ENCODE measurements at regions of chr7 and their contacts with region 1.

Region 1: GRCh38 chr7:7566651-7567611 is at the start of gene MIOS:
- H3K4me3 Mint-ChIP-seq: peak within 1 kb of the TSS; percentile 70
- H3K27ac Mint-ChIP-seq: no peak within 1 kb of the TSS
- H3K4me1 Mint-ChIP-seq: peaks cover 29% of the 10 kb centered on the region
- H3K27me3 Mint-ChIP-seq: no peaks in the 10 kb centered on the region

Region 2: DNA sequence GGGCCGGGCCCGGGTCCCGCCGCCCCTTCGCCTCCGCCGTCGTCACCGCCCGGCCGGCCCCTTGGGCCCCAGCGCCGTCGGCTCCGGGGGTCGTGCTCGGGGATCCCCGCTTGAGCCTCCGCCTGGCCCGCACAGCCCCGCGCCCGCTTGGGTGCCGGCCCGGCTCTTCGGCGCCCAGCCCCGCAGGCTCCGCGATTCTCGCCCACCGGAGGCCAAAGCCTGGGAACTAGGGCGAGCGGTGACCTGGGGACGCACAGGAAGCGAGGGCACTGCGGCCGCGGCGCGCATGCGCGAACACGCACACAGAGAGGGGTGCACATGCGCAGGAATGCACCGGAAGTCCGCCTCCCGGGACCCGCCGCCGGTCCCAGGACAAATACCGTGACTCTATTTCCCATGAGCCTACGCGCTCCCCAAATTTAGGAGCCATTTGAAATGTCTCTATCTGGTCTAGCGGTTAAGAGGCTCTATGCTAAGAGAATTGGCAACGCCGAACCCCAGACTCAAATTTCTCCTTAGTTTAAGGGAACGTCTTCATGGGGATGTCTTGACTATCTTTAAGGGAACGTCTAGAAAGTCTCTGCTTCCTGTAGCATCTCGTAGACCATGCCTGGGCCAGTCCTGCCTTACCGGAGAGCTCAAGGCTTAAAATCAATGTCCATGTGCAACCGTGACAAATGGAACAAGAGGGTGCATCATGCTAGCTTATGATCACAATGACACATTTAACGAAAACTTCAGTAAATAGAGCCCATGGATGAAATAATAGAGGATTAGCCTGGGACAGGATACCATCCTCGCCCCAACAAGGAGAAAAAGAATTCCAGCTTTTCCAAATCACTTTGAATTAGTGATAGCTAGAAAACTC is 860.0 kb before region 1 on chr7 and contains the start of gene ZNF12:
- intact Hi-C with region 1: loop called (anchors 10 kb)
- H3K4me3 Mint-ChIP-seq: peak within 1 kb of the TSS; percentile 92
- H3K27ac Mint-ChIP-seq: peak within 1 kb of the TSS; percentile 88
- H3K4me1 Mint-ChIP-seq: peaks cover 37% of the 10 kb centered on the region
- H3K27me3 Mint-ChIP-seq: peaks cover 27% of the 10 kb centered on the region

Region 3: DNA sequence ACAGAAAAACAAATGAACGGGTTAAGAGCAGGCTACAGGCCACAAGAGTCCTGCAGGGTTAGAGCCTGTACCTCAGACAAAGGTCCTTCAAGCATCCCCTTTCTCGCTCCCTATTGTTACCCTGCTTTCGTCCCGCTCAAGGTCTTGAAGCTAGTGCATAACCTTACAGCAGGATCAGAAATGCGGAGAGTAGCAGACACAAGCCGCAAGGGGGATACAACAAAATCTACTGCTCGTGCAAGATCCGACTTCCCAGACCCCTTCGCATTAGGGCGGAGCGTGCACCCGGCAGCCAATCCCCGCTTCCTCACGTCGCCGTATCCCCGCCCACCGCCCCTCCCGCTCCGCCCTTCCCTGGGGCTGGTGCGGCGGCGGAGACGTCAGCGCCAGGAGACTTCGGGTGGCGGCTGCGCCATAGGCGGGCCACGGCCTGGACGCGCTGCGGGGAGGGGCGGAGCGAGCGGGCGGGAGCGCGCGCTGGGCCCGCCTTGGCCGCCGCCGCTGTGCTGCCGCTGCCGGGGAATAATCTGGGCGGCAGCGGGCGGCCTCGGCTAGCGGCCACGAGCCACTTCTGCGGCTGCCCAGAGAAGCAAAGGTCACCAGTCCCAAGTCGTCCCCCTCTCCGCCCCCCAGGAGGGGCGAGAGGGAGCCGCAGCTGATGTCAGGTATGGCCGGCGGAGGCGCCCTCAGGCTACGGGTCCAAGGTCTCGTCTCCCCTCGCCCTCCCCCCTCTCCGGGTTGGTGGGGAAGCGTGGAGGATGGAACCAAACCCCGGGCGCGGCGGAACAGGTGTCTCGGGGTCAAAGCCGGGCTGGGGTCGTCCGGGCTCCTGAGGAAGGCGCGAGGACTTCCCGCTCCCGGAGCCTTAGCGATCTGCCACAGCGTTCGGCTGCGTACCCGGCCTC is 384.5 kb before region 1 on chr7 and contains the start of gene C1GALT1:
- intact Hi-C with region 1: loop called (anchors 5 kb)
- H3K4me3 Mint-ChIP-seq: peak within 1 kb of the TSS; percentile 76
- H3K27ac Mint-ChIP-seq: peak within 1 kb of the TSS; percentile 98
- H3K4me1 Mint-ChIP-seq: peaks cover 14% of the 10 kb centered on the region
- H3K27me3 Mint-ChIP-seq: no peaks in the 10 kb centered on the region

Region 4: DNA sequence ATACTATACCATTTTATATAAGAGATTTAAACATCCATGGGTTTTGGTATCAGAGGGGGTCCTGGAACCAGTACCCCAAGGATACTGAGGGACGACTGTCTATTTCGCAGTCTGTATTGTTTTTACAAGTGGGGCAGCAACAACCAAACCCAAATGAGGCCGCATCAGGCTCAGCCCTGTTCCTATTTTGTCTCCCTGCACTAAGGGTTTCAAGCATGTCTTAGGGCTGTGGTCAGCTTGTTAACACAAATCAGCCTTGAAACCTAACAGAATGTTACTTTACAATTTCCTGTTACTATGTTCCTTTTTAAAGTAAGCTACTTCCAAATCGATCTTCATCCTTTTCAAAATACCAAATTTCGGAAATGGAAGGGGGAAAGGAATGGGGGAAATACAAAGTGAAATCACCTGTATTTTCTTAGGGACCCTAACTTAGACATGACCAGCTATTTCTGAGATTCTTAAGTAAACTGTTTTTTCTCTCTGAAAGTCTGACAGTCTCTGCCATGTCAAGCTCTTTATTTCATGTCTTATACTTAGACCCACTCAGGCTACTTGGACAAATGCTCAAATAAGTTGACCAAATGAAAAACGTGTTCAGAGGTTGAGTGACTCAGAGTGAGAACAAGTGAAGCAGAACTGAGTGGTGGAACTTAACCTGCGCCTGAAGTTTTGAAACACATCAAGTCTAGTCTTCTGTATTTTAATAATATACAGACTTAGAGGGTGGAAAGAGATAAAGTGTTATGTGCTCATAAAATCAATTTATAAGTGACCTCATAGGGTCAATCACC is 308.8 kb before region 1 on chr7:
- intact Hi-C with region 1: loop called (anchors 10 kb)
- H3K4me3 Mint-ChIP-seq: no peak overlapping the region
- H3K27ac Mint-ChIP-seq: peak overlapping the region; percentile 78
- H3K4me1 Mint-ChIP-seq: peaks cover 27% of the 10 kb centered on the region
- H3K27me3 Mint-ChIP-seq: no peaks in the 10 kb centered on the region

Region 5: GRCh38 chr7:7640221-7641128 is 73.5 kb after region 1 on chr7 and contains the start of gene UMAD1:
- intact Hi-C with region 1: loop called (anchors 2 kb)
- H3K4me3 Mint-ChIP-seq: peak within 1 kb of the TSS; percentile 94
- H3K27ac Mint-ChIP-seq: peak within 1 kb of the TSS; percentile 95
- H3K4me1 Mint-ChIP-seq: peaks cover 21% of the 10 kb centered on the region
- H3K27me3 Mint-ChIP-seq: no peaks in the 10 kb centered on the region

Region 6: GRCh38 chr7:7693881-7694280 is 127.0 kb after region 1 on chr7:
- intact Hi-C with region 1: no loop called
- H3K4me3 Mint-ChIP-seq: no peak overlapping the region
- H3K27ac Mint-ChIP-seq: no peak overlapping the region
- H3K4me1 Mint-ChIP-seq: peaks cover 13% of the 10 kb centered on the region
- H3K27me3 Mint-ChIP-seq: no peaks in the 10 kb centered on the region

Region 7: DNA sequence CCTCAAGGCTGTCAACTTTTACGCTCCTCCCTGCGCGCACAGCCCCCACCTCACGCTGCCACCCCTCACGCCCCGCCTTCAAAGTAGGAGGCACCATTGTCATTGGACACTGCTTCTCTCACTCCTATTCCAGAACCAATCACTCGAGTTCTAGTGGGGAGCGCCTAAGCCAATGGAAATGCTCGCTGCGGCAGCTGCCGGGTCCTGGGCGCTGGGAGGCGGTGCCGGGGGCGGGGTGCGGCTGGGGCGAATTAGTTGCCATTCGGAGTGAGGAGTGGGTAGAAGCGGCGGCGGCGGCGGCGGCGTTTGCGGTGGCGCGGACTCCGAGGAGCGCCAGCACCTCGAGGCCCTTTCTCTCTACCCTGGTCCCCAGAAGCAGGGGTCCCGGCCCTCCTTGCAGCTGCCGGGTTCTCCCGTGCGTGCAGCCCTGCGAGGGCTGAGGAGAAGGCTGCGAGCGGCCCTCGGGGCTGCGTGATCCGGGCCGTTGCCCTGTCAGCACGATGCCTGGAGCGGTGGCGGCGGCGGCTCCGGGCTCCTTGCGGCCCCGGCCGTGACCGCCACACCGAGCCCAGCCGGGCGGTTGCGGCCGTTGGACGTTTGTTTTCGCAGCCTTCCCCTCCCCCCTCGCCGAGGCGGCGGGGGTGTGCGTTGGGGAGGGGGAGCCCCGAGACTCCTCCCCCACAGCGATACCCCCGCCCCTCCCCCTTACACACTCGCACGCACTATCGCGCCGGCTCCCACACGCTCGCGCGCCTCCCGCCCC is 401.8 kb after region 1 on chr7 and contains the start of gene GLCCI1:
- intact Hi-C with region 1: loop called (anchors 5 kb)
- H3K4me3 Mint-ChIP-seq: peak within 1 kb of the TSS; percentile 86
- H3K27ac Mint-ChIP-seq: peak within 1 kb of the TSS; percentile 77
- H3K4me1 Mint-ChIP-seq: peaks cover 11% of the 10 kb centered on the region
- H3K27me3 Mint-ChIP-seq: peaks cover 1% of the 10 kb centered on the region